ENCODE measurements at regions of chr19 and their contacts with region 1.

Region 1: GRCh38 chr19:39970675-39971379 is at the start of gene PSMC4:
- DNase-seq: peak; percentile 97 to 100 (median 98)
- ATAC-seq: peak; percentile 96
- H3K4me3 ChIP-seq: peak within 1 kb of the TSS; percentile 77
- H3K4me3 Mint-ChIP-seq: peak within 1 kb of the TSS; percentile 98
- H3K27ac ChIP-seq: peak within 1 kb of the TSS; percentile 87 to 91
- H3K27ac Mint-ChIP-seq: peak within 1 kb of the TSS; percentile 97
- H3K4me1 ChIP-seq: peaks cover 51% of the 10 kb centered on the region
- H3K4me1 Mint-ChIP-seq: peaks cover 58% of the 10 kb centered on the region
- H3K27me3 ChIP-seq: no peaks in the 10 kb centered on the region
- H3K27me3 Mint-ChIP-seq: no peaks in the 10 kb centered on the region
- CTCF ChIP-seq: peak; percentile 88
- total RNA-seq, gene PSMC4: 61.3 to 67.4 TPM

Region 2: GRCh38 chr19:39833464-39834286 is 137.2 kb before region 1 on chr19 and contains the start of gene DYRK1B:
- CTCF ChIA-PET with region 1: interaction called, 4 read pairs
- POLR2A ChIA-PET with region 1: interaction called, 21 read pairs
- intact Hi-C with region 1: loop called in 1 of 2 experiments (anchors 5 kb)
- DNase-seq: peak; percentile 96 to 100 (median 98)
- ATAC-seq: peak; percentile 86
- H3K4me3 ChIP-seq: peak within 1 kb of the TSS; percentile 88
- H3K4me3 Mint-ChIP-seq: peak within 1 kb of the TSS; percentile 81
- H3K27ac ChIP-seq: peak within 1 kb of the TSS; percentile 96 to 99
- H3K27ac Mint-ChIP-seq: peak within 1 kb of the TSS; percentile 68
- H3K4me1 ChIP-seq: peaks cover 29% of the 10 kb centered on the region
- H3K4me1 Mint-ChIP-seq: peaks cover 20% of the 10 kb centered on the region
- H3K27me3 ChIP-seq: no peaks in the 10 kb centered on the region
- H3K27me3 Mint-ChIP-seq: no peaks in the 10 kb centered on the region
- CTCF ChIP-seq: no peak
- total RNA-seq, gene DYRK1B: 18.9 to 19.4 TPM

Region 3: GRCh38 chr19:39906820-39907611 is 63.8 kb before region 1 on chr19:
- CTCF ChIA-PET with region 1: interaction called, 5 read pairs
- POLR2A ChIA-PET with region 1: interaction called, 12 read pairs
- intact Hi-C with region 1: loop called in 1 of 2 experiments (anchors 5 kb)
- DNase-seq: no peak
- ATAC-seq: no peak
- H3K4me3 ChIP-seq: no peak overlapping the region
- H3K4me3 Mint-ChIP-seq: no peak overlapping the region
- H3K27ac ChIP-seq: no peak overlapping the region
- H3K27ac Mint-ChIP-seq: no peak overlapping the region
- H3K4me1 ChIP-seq: no peaks in the 10 kb centered on the region
- H3K4me1 Mint-ChIP-seq: peaks cover 31% of the 10 kb centered on the region
- H3K27me3 ChIP-seq: no peaks in the 10 kb centered on the region
- H3K27me3 Mint-ChIP-seq: no peaks in the 10 kb centered on the region
- CTCF ChIP-seq: no peak

Region 4: GRCh38 chr19:39941615-39942365 is 29.0 kb before region 1 on chr19:
- CTCF ChIA-PET with region 1: interaction called, 19 read pairs
- POLR2A ChIA-PET with region 1: interaction called, 172 read pairs
- intact Hi-C with region 1: loop called (anchors 1 to 2 kb)
- DNase-seq: peak in 12 of 14 experiments; percentile 12 to 93 (median 42)
- ATAC-seq: peak; percentile 75
- H3K4me3 ChIP-seq: peak overlapping the region; percentile 42
- H3K4me3 Mint-ChIP-seq: peak overlapping the region; percentile 68
- H3K27ac ChIP-seq: peak overlapping the region; percentile 87 to 88
- H3K27ac Mint-ChIP-seq: peak overlapping the region; percentile 86
- H3K4me1 ChIP-seq: peaks cover 70% of the 10 kb centered on the region
- H3K4me1 Mint-ChIP-seq: peaks cover 73% of the 10 kb centered on the region
- H3K27me3 ChIP-seq: no peaks in the 10 kb centered on the region
- H3K27me3 Mint-ChIP-seq: no peaks in the 10 kb centered on the region
- CTCF ChIP-seq: no peak

Region 5: GRCh38 chr19:40055832-40056504 is 85.1 kb after region 1 on chr19 and contains the start of gene ZNF780B:
- CTCF ChIA-PET with region 1: interaction called, 7 read pairs
- POLR2A ChIA-PET with region 1: interaction called, 13 read pairs
- intact Hi-C with region 1: no loop called
- DNase-seq: peak; percentile 47 to 80 (median 57)
- ATAC-seq: peak; percentile 91
- H3K4me3 ChIP-seq: peak within 1 kb of the TSS; percentile 92
- H3K4me3 Mint-ChIP-seq: peak within 1 kb of the TSS; percentile 100
- H3K27ac ChIP-seq: peak within 1 kb of the TSS; percentile 64 to 75
- H3K27ac Mint-ChIP-seq: peak within 1 kb of the TSS; percentile 96
- H3K4me1 ChIP-seq: peaks cover 18% of the 10 kb centered on the region
- H3K4me1 Mint-ChIP-seq: peaks cover 57% of the 10 kb centered on the region
- H3K27me3 ChIP-seq: no peaks in the 10 kb centered on the region
- H3K27me3 Mint-ChIP-seq: no peaks in the 10 kb centered on the region
- CTCF ChIP-seq: no peak
- total RNA-seq, gene ZNF780B: 11.8 to 12.0 TPM